Esophagus muscularis mucosa (tissue), 4 donors: ENCODE measurements at regions of chrX and their contacts with region 1.

Region 1: GRCh38 chrX:129637217-129638109 is 17.3 kb downstream of the APLN start:
- DNase-seq: peak; percentile 93
- H3K4me3 ChIP-seq: no peak overlapping the region
- H3K27ac ChIP-seq: no peak overlapping the region
- H3K4me1 ChIP-seq: peaks cover 0 to 7% (median 2%) of the 10 kb centered on the region in 4 donors
- H3K27me3 ChIP-seq: peaks cover 0 to 4% (median 0%) of the 10 kb centered on the region in 4 donors
- CTCF ChIP-seq: peak; percentile 85 to 92 (median 86)
- EP300 ChIP-seq: no peak
- POLR2A ChIP-seq: no peak

Region 2: GRCh38 chrX:129522184-129523078 is 115.0 kb before region 1 on chrX:
- intact Hi-C with region 1: no loop called
- DNase-seq: no peak
- H3K4me3 ChIP-seq: peak overlapping the region; percentile 81 to 89 (median 82)
- H3K27ac ChIP-seq: peak overlapping the region; percentile 93 to 96 (median 94)
- H3K4me1 ChIP-seq: peaks cover 0 to 32% (median 7%) of the 10 kb centered on the region in 4 donors
- H3K27me3 ChIP-seq: no peaks in the 10 kb centered on the region
- CTCF ChIP-seq: peak in 2 of 3 experiments; percentile 6 to 12
- EP300 ChIP-seq: no peak
- POLR2A ChIP-seq: no peak

Region 3: DNA sequence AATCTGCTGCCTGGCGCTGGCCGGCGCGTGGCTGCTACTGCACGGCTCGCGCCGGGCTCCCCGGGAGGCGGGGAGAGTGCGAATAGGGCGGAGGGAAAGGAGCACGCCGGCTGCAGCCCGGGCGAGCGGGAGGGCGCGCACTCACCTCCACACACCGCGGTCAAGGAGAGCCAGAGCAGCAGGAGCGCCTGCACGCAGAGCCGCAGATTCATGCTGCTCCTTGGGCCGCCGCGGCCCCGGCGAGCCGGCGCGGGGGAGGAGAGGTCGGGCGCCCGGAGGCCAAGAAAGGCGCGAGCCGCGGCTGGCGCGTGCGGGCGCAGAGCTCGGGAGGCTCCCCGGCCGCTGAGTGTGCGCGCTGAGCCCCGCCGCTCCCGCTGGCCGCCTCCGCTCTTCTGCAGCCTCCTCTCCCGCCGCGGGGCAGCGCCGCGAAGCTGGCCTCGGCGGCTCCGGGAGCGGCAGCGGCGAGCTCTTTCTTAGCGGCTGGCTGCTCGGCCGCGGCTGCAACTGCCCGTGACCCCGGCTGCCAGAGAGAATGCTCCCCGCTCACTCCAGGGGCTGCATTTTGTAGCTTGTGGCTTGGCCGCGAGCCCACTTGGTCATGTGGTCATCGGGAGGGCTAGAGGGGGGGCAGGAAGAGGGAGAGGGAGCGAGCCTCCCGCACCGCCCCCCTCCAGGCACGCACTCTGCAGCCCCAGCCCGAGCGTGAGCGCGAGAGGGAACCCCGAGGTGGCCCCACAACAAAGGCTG is 17.1 kb after region 1 on chrX and contains the start of gene APLN:
- intact Hi-C with region 1: no loop called
- DNase-seq: peak; percentile 39
- H3K4me3 ChIP-seq: peak within 1 kb of the TSS; percentile 52 to 65 (median 56)
- H3K27ac ChIP-seq: peak within 1 kb of the TSS in 3 of 4 donors; percentile 15 to 61 (median 53)
- H3K4me1 ChIP-seq: peaks cover 15 to 26% (median 18%) of the 10 kb centered on the region in 4 donors
- H3K27me3 ChIP-seq: no peaks in the 10 kb centered on the region
- CTCF ChIP-seq: no peak
- EP300 ChIP-seq: no peak
- POLR2A ChIP-seq: no peak
- total RNA-seq, gene APLN: 0.42 to 0.99 (median 0.78) TPM

Region 4: DNA sequence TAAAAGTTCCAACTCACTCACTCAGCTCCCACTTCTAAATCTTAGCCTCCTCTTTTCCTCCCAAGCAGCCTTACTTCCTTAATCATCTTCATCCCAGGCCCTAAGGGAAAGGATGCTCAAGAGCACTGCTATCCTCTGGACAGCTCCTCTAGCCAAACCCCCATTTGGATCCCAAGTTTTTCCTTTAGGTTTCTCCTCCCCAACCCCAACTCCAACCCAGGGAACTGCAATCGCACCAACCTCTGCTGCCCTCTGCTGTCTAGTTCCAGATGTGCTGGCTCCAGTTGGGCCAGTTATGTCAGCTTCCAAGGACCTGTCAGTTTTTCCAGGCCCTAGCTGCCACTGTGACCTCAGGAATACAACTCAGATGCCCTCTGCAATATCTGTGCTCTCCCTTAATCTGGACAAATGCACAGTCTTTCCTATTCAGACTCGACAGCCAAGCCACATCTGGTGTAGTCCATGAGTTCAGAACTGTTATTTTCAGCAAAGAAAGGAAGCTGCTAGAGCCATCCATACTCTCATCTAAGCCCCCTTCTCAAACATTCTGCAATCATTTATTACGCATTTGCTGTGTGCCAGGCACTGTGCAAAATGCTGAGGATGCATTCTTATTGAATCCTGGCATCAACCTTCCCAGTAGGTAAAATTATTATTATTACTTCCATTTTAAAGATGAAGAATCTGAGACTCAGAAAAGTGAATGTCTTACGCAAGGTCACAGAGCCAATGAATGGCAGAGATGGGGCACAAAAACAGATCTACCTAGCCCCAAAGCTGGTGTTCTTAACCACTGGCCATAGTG is 89.0 kb after region 1 on chrX:
- intact Hi-C with region 1: loop called (anchors 1 kb)
- DNase-seq: no peak
- H3K4me3 ChIP-seq: no peak overlapping the region
- H3K27ac ChIP-seq: no peak overlapping the region
- H3K4me1 ChIP-seq: no peaks in the 10 kb centered on the region
- H3K27me3 ChIP-seq: peaks cover 0 to 3% (median 0%) of the 10 kb centered on the region in 4 donors
- CTCF ChIP-seq: peak; percentile 68 to 72 (median 69)
- EP300 ChIP-seq: no peak
- POLR2A ChIP-seq: no peak

Region 5: GRCh38 chrX:129823115-129823514 is 185.7 kb after region 1 on chrX:
- intact Hi-C with region 1: loop called (anchors 10 kb)
- DNase-seq: no peak
- H3K4me3 ChIP-seq: no peak overlapping the region
- H3K27ac ChIP-seq: no peak overlapping the region
- H3K4me1 ChIP-seq: no peaks in the 10 kb centered on the region
- H3K27me3 ChIP-seq: no peaks in the 10 kb centered on the region
- CTCF ChIP-seq: peak; percentile 33 to 47 (median 34)
- EP300 ChIP-seq: no peak
- POLR2A ChIP-seq: no peak